ENCODE measurements at regions of chr9 and their contacts with region 1.

Region 1: DNA sequence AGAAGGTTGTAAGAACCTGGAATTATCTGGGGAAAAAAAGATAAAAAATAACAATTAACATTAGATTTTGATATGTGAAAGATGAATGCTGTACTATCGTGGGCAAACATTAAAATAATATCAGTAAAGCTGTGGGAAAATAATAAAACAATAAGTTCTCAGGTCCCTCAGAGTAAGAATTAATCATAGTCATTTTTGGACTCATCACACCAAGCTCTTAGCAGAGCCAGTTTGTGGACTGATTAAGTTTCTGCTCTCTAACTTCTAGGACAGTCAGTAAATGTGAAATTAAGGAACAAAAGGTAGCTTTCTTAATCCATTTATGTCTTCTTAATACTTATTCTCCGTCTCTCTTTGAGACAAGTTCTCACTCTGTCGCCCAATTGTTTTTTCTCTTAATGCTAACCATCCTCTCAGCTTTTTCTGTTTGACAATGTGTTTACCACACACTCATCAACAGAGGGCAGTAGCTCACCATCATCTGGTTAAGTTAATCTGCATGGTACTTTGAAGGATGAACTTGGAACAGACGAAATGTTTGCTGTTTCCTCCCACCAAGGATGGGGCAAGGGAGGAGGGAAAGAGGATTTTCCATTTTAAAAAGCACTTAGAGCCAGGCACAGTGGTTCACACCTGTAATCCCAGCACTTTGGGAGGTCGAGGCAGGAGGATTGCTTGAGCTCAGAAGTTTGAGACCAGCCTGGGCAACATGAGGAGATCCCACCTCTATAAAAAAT is 5.3 kb upstream of the ACO1 start:
- DNase-seq: peak; percentile 80
- H3K4me3 ChIP-seq: no peak overlapping the region
- CTCF ChIP-seq: peak; percentile 73

Region 2: DNA sequence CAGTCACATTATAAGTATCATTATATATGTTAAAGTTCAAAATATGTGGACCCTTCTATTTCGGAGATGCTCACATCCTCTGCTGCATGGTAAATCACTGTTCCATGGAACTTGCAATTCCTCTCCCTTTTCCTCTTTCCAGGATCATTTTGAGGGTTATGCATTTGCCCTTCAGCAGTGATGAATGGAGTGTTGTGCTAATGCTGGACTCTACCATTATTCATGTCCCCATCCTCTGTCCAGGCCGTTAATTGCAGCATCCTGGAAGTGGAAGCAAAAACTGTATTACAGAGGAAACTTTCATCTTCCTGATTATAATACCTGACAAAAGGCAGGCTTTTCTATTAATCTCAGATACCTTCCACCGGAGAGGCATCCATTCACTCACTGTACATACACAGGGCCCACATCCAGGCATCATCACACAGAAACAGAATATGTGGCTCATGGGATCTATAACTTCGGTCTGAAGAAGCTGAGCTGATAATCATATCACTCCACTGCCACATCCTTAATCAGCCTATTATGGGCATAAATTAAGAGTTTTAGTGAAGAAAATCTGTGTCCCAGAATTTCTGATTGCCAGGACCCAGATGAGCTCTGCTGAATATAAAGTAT is 59.7 kb before region 1 on chr9:
- in situ Hi-C with region 1: no loop called
- DNase-seq: no peak
- H3K4me3 ChIP-seq: no peak overlapping the region
- CTCF ChIP-seq: no peak

Region 3: GRCh38 chr9:32550562-32551433 is 171.6 kb after region 1 on chr9:
- in situ Hi-C with region 1: loop called (anchors 25 kb)
- DNase-seq: peak; percentile 84
- H3K4me3 ChIP-seq: peak overlapping the region; percentile 73
- CTCF ChIP-seq: peak; percentile 17

Region 4: GRCh38 chr9:32968101-32969011 is 589.2 kb after region 1 on chr9:
- in situ Hi-C with region 1: loop called (anchors 25 kb)
- DNase-seq: peak; percentile 18
- H3K4me3 ChIP-seq: no peak overlapping the region
- CTCF ChIP-seq: peak; percentile 74

Measured in astrocyte of the cerebellum (primary cell).